Heart right ventricle (tissue), 16 donors: ENCODE measurements at regions of chr2 and their contacts with region 1.

Region 1: DNA sequence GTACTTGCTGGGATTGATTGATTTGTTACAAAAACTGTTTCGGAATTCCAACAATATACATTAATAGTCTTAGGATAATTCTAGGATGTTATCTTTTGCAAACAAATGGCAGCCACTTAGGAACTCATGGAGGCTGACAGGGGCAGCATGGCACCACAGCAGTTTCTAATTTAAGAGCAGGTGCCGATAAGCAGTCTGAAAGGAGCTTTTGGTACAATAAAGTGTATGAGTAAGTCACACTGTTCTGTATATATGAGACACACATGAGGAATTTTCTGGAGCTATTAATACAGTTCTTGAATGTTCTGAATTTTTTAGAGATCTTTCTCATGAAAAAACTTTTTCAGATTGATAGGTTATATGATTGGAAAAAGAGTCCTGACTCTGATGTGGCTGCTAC is 52.2 kb downstream of the EIF5B start:
- DNase-seq: peak in 1 of 2 donors; percentile 23
- ATAC-seq: peak; percentile 75 to 98 (median 88)
- H3K4me3 ChIP-seq: peak overlapping the region in 1 of 10 donors; percentile 11
- H3K27ac ChIP-seq: peak overlapping the region in 9 of 10 donors; percentile 38 to 75 (median 63)
- H3K4me1 ChIP-seq: peaks cover 0 to 17% (median 8%) of the 10 kb centered on the region in 9 donors
- H3K27me3 ChIP-seq: no peaks in the 10 kb centered on the region
- CTCF ChIP-seq: no peak

Region 2: GRCh38 chr2:99337113-99338028 is 52.0 kb before region 1 on chr2 and contains the start of gene EIF5B:
- intact Hi-C with region 1: loop called in 1 of 10 experiments (anchors 2 kb)
- DNase-seq: peak; percentile 95 to 97
- ATAC-seq: peak; percentile 91 to 96 (median 94)
- H3K4me3 ChIP-seq: peak within 1 kb of the TSS; percentile 66 to 100 (median 90)
- H3K27ac ChIP-seq: peak within 1 kb of the TSS; percentile 55 to 98 (median 89)
- H3K4me1 ChIP-seq: peaks cover 3 to 57% (median 42%) of the 10 kb centered on the region in 9 donors
- H3K27me3 ChIP-seq: no peaks in the 10 kb centered on the region
- CTCF ChIP-seq: peak; percentile 40 to 89 (median 70)
- total RNA-seq, gene EIF5B: 64.5 to 123 (median 91.8) TPM